WTC11 (cell line): ENCODE measurements at regions of chr14 and their contacts with region 1.

Region 1: DNA sequence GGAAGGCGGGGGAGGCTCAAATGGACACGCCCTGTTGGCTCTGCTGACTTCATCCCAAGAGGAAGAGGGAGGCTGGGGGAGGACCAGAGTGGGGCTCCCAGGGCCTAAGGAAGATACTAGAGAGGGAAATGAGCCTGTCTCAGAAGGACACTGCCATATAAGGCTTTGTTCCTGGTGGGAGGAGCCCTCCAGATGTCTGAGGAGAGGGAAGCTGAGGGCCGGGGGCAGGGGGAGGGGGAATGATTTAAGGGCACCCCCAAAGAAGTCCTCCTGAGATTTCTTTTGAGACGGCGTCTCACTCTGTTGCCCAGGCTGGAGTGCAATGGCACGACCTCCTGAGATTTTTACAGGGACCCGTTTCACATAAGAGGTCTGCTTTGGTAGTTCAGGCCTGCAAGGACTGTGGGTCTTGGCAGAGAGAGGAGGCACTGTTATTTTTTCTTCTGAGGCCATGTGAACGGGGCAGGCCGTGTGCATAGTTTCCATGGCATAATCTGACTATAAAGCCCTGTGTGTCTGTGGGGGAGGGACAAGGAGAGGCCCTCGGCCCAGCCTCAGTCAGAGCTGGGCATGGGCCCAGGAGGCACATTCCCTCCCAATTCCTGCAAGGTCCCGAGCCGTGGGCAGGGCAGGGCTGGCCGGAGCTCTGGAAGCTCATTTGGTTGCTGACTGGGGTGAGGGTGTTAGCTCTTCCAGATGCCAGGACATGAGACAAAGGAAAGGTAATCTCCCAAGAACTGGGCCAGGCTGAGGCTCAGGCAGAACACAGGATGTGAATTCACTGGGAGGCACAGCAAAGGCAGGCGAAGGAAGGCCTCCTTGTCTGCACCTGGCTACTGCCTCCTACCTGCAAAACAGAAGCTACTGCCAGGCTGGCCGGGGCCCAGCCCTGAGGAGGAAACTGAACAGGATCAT is 22.2 kb upstream of the PLEKHG3 start:
- DNase-seq: peak; percentile 40
- ATAC-seq: peak; percentile 84
- H3K4me3 Mint-ChIP-seq: no peak overlapping the region
- H3K27ac Mint-ChIP-seq: peak overlapping the region; percentile 66; the same call in 1 of the 2 replicates
- H3K4me1 Mint-ChIP-seq: peaks cover 39% of the 10 kb centered on the region
- H3K27me3 Mint-ChIP-seq: peaks cover under 1% of the 10 kb centered on the region
- CTCF ChIP-seq: no peak

Region 2: DNA sequence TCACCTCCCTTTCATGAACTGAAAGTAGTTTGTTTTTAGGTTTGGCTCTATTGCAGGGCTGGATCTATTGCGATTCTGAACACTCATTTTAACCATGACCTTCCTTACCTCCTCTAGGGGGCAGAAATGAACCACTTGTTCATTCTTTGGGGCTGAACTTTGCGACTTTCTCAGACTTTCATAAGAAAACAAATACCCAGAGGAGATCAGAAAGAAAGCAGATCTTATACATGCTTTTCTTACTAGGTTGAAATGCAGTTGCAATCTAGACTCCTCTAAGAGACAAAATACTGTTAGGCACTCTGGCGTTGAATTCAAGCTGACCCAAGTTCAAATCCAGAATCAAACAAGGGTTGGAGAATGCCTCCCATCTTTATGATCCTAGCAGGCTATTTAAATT is 10.5 kb before region 1 on chr14:
- CTCF ChIA-PET with region 1: interaction called, 12 read pairs
- POLR2A ChIA-PET with region 1: no interaction called
- DNase-seq: no peak
- ATAC-seq: peak; percentile 60; the same call in 1 of the 2 replicates
- H3K4me3 Mint-ChIP-seq: no peak overlapping the region
- H3K27ac Mint-ChIP-seq: no peak overlapping the region
- H3K4me1 Mint-ChIP-seq: peaks cover 17% of the 10 kb centered on the region
- H3K27me3 Mint-ChIP-seq: peaks cover 3% of the 10 kb centered on the region; the same call in 1 of the 2 replicates
- CTCF ChIP-seq: peak; percentile 29; the same call in 1 of the 2 replicates

Region 3: GRCh38 chr14:64698903-64699302 is 16.9 kb after region 1 on chr14:
- CTCF ChIA-PET with region 1: interaction called, 17 read pairs
- POLR2A ChIA-PET with region 1: no interaction called
- DNase-seq: no peak
- ATAC-seq: 0 out of 2 replicates have a peak, but pooled peaks have one; percentile 1
- H3K4me3 Mint-ChIP-seq: no peak overlapping the region
- H3K27ac Mint-ChIP-seq: peak overlapping the region; percentile 61; the same call in 1 of the 2 replicates
- H3K4me1 Mint-ChIP-seq: peaks cover 64% of the 10 kb centered on the region
- H3K27me3 Mint-ChIP-seq: no peaks in the 10 kb centered on the region
- CTCF ChIP-seq: no peak